ENCODE measurements at regions of chr19 and their contacts with region 1.

Region 1: DNA sequence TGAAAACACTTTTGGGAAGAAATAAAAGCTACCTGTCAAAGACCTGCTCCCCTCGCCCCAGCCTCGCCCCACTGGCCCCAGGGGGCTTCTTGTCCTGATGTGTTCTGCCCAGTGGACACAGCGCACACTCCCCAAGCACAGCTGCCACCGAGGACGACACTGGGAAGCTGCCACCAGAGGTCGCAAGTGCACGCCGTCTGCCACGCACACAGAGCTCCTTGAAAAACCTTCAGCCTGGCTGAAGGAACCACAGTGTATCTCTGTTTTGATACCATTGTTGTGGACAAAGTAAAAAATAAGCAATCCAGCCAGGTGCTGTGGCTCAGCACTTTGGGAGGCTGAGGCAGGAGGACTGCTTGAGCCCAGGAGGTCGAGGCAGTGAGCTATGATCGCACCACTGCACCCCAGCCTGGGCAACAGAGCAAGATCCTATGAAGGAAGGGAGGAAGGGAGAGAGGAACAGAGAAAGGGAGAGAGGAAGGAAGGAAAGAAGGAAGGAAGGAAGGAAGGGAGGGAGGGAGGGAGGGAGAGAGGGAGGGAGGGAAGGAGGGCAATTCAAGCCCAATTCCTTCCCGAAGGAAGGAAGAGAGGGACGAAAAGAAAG is 57.3 kb downstream of the CEBPG start:
- DNase-seq: peak; percentile 63 to 86
- H3K4me3 ChIP-seq: no peak overlapping the region
- H3K4me1 ChIP-seq: no peaks in the 10 kb centered on the region
- H3K27me3 ChIP-seq: no peaks in the 10 kb centered on the region

Region 2: DNA sequence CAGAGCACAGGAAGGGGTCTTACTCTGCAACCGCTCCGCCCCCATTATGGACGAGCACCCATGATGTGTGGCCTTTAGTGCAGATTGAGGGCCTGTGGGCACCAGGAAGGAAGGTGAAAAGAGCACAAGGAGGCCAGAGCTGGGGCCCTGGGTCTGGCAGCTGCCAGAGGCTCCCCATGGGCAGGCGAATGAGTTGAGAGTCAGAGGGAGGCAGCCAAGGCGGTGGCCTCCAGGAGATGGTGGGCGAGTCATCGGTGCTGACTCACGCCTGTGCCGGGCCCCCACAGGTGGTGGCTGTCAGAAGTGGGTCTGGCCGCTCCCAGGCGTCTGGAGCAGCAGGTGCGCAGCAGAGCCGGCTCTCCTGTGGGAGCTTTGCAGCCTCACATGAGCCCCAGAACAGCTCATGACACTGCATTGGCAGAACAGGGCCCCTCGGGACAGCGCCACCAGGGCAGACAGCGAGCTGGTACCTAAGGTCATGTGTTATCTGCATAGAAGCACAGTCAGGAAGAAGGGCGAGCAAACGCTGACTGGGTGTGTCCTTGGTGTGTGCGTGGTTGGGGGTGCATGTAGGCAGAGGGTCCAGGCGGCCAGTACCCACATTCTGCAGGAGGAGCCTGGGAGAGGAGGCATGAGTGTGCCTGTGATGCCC is 259.7 kb after region 1 on chr19:
- in situ Hi-C with region 1: no loop called
- DNase-seq: no peak
- H3K4me3 ChIP-seq: no peak overlapping the region
- H3K4me1 ChIP-seq: no peaks in the 10 kb centered on the region
- H3K27me3 ChIP-seq: no peaks in the 10 kb centered on the region

Region 3: DNA sequence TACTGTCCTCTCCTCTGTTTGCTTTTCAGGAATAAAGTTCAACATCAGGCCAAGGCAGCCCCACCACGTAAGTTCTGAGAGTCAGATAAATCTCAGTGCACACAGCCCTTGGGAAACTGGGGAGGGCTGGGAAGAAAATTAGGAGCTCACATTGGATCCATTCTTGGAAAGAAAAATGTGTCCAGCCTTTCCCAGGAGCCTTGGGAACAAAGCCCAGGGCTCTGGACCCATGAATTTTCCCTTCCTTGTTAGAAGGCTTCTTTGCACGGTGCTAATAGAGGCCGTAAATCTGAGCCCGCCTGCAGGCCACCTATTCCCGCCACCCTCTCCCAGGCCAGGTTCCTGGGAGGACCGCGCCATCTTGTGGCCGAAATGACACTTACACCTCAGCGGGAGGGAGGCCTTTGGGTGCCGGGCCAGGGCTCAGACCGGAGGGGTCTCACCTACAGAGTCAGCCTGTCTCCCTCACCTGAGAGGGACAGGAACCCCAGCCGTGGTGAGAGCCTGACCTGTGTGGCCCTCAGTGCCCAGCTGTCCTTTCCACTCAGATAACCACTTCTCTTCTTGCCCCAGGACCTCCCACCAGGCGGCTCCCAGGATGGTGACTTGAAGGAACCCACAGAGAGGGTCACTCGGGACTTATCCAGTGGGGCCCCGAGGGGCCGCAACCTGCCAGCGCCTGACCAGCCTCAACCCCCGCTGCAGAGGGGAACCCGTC is 340.8 kb after region 1 on chr19:
- in situ Hi-C with region 1: loop called (anchors 5 kb)
- DNase-seq: peak; percentile 54 to 89
- H3K4me3 ChIP-seq: no peak overlapping the region
- H3K4me1 ChIP-seq: no peaks in the 10 kb centered on the region
- H3K27me3 ChIP-seq: no peaks in the 10 kb centered on the region

Measured in HAP-1 (cell line).